ENCODE measurements at regions of chr9 and their contacts with region 1.

Region 1: DNA sequence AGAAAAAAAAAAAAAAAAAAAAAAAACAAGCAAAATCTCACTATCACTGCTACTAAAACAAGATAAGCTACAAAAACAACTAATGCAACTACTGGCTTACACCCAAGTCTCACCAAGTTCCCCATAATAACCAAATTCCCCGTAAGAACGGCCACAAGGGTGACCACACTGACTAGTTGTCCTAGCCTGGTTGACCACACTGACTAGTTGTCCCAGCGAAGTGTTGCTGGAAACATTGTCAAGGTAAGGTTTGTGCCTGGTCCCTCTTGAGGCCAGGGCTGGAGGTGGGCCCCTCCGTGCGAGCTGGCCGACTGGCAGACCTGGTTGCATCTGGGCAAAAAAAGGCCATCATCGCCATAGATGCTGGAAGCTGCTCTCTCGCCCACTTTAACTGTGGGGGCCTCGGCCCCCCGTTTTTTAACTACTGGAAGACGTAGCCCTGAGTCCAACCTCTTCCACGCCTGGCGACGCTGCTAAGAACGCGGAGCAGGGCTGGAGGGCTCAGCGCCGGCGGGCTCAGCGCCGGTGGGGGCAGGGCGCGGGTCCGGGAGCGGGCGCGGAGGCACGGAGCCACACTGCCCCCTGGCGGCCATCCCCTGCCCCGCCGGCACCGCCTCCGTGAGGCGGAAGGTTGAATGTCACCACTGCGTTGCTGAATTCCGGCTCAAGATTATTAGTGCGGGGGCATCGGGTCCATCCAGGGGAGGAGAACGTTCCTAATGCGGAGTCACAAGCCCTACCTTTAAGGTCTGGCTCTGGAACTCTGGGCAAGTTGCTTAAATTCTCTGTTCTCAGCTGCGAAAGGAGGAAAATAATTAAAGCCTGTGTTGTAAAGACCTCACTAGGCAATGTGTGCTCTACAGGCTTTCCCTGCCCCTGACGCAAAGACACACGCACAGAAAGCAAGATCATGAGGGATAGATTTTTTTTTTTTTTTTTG is 84.0 kb downstream of the HSD17B3 start:
- DNase-seq: peak; percentile 59
- H3K4me3 Mint-ChIP-seq: peak overlapping the region; percentile 76
- H3K27ac Mint-ChIP-seq: no peak overlapping the region
- H3K4me1 Mint-ChIP-seq: peaks cover 15% of the 10 kb centered on the region
- H3K27me3 Mint-ChIP-seq: peaks cover 54% of the 10 kb centered on the region

Region 2: DNA sequence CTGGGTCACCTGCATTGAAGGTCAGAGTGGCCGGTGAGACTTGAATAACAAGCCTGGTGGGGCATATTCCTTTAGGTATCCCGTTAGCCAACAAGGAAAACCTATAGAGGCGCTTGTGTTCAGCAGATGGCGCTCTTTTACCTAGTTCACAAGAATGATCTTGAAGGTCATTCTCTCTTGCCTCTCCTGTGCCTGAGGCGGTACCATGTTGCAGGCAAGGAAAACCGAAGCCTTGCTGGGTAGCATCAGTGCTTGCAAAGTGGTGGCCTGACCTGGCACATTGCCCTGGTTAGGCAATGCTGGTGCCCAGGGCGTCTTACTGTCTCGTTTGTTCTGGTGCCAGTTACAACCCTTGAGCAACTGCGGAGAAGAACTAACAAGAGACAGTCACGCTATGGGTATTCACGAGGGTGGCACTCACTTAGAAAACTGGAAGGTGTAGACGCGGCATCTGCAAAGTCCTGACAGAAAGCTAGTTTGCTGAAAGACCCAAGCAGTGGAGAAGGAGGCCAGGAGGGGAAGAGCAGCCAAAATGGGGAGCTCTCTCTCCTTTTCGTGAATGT is 1434.8 kb before region 1 on chr9:
- intact Hi-C with region 1: loop called (anchors 1 kb)
- DNase-seq: peak; percentile 11
- H3K4me3 Mint-ChIP-seq: no peak overlapping the region
- H3K27ac Mint-ChIP-seq: no peak overlapping the region
- H3K4me1 Mint-ChIP-seq: peaks cover 20% of the 10 kb centered on the region
- H3K27me3 Mint-ChIP-seq: no peaks in the 10 kb centered on the region

Region 3: DNA sequence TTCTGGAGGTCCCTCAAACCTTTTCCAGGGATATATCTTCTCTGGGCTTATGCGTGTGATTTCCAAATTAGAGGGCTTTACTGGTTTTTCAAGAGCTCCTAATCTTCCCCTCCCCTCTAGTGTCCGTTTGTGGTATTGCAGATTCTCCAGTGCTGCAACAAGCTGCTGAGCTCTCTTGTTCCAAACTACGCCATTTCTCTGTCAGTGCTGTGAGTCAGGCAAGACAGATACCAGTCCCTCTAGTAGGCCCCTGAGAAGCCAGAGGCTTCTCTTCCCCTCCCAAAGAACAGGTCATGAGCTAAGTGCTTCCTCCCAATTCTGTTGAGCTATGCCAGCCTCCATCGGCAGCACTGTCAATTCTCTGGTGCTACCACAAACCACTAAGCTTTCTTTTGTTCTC is 1050.0 kb before region 1 on chr9:
- intact Hi-C with region 1: loop called (anchors 5 kb)
- DNase-seq: peak; percentile 47
- H3K4me3 Mint-ChIP-seq: peak overlapping the region; percentile 3
- H3K27ac Mint-ChIP-seq: peak overlapping the region; percentile 61
- H3K4me1 Mint-ChIP-seq: peaks cover 48% of the 10 kb centered on the region
- H3K27me3 Mint-ChIP-seq: no peaks in the 10 kb centered on the region

Region 4: GRCh38 chr9:95341293-95341962 is 876.6 kb before region 1 on chr9:
- intact Hi-C with region 1: loop called (anchors 10 kb)
- DNase-seq: no peak
- H3K4me3 Mint-ChIP-seq: no peak overlapping the region
- H3K27ac Mint-ChIP-seq: no peak overlapping the region
- H3K4me1 Mint-ChIP-seq: peaks cover 11% of the 10 kb centered on the region
- H3K27me3 Mint-ChIP-seq: no peaks in the 10 kb centered on the region

Region 5: DNA sequence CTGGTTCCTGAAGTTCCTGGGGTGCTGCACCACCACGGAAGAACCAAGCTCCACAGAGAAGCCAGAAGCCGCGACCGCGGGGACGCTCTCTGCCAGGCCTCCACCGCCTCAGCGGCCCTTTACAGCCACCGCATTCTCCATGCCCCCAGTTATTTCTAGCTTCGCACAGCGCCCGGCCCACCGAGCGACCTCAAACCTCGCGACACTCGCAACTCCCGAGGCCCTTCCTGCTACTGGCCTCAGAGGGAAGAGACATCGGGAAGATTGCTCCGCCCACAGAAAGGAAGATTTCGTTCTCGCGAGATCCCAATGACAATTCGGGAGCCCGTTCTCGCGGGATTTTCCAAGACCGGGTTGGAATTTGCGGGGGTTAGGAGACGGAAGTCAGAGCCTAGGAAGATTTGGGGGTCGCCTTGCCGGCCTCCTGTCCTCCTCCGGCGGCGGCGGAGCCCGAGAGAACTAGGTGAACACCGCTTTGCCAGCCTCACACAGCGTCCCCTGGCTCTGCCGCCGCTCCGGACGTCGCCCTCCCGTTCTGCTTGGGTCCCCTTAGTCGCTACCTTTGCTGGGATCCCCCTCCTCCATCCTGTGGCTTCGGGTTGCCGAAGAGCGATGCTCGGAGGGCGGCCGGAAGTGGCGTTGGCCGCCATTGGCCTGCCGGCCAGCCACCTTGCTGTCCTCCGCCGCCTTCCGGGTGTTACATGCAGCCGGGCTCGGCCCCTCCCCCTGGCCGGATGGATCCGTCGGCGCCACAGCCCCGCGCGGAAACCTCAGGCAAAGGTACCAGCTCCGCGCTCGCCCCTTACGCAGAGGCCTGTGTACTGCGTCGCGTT is 342.5 kb before region 1 on chr9 and contains the start of gene ERCC6L2:
- intact Hi-C with region 1: loop called (anchors 2 kb)
- DNase-seq: peak; percentile 92
- H3K4me3 Mint-ChIP-seq: no peak within 1 kb of the TSS
- H3K27ac Mint-ChIP-seq: no peak within 1 kb of the TSS
- H3K4me1 Mint-ChIP-seq: peaks cover 33% of the 10 kb centered on the region
- H3K27me3 Mint-ChIP-seq: no peaks in the 10 kb centered on the region
- total RNA-seq, gene ERCC6L2: 31.2 and 33.7 TPM in 2 replicates

Region 6: GRCh38 chr9:96150324-96151227 is 67.4 kb before region 1 on chr9:
- intact Hi-C with region 1: loop called (anchors 2 kb)
- DNase-seq: peak; percentile 42
- H3K4me3 Mint-ChIP-seq: peak overlapping the region; percentile 47
- H3K27ac Mint-ChIP-seq: peak overlapping the region; percentile 65
- H3K4me1 Mint-ChIP-seq: peaks cover 38% of the 10 kb centered on the region
- H3K27me3 Mint-ChIP-seq: peaks cover 15% of the 10 kb centered on the region

Region 7: DNA sequence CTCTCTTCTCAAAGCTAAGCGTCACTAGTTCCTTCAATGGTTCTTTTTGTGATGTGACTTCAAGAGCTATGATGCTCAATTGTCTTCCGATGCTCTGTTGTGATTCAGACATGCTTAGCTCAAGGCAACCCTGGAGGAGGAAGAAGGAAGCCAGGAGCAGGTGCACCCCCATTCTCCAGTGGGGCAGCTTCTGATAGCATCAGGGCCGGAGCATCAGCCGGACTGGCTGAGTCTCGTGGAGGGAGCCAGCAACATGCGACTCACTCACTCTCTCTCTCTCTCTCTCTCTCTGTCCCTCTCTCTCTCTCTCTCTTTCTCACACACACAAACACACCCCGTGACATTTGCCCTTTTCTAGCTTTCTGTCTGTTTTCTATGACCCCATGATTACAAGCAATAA is 56.2 kb before region 1 on chr9:
- intact Hi-C with region 1: no loop called
- DNase-seq: no peak
- H3K4me3 Mint-ChIP-seq: no peak overlapping the region
- H3K27ac Mint-ChIP-seq: no peak overlapping the region
- H3K4me1 Mint-ChIP-seq: peaks cover 25% of the 10 kb centered on the region
- H3K27me3 Mint-ChIP-seq: peaks cover 6% of the 10 kb centered on the region

Region 8: DNA sequence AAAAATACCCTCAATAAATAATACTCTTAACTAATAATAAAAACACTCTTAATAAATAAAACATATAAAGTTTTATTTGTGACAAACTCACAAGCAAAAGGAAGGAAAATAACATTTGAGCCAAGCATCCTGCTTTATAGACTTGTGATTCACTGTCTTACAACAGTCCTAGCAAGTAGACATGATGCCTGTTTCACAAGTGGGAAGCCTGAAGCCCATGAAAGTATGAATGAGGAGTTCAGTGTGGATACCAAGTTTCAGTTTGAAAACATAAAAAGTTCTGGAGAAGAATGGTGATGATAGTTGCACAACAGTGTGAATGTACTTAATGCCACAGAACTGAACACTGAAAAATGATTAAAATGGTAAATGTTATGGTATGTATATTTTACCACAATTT is 242.9 kb after region 1 on chr9:
- intact Hi-C with region 1: no loop called
- DNase-seq: no peak
- H3K4me3 Mint-ChIP-seq: no peak overlapping the region
- H3K27ac Mint-ChIP-seq: no peak overlapping the region
- H3K4me1 Mint-ChIP-seq: peaks cover 9% of the 10 kb centered on the region
- H3K27me3 Mint-ChIP-seq: no peaks in the 10 kb centered on the region